B cell (primary cell): ENCODE measurements at regions of chr9 and their contacts with region 1.

Region 1: GRCh38 chr9:136410500-136411287 is at the starts of genes ENTR1 and PMPCA:
- DNase-seq: peak; percentile 95
- ATAC-seq: peak; percentile 88
- H3K4me3 ChIP-seq: peak within 1 kb of the TSS; percentile 46 to 96 (median 81)
- H3K4me3 Mint-ChIP-seq: peak within 1 kb of the TSS; percentile 92
- H3K27ac ChIP-seq: peak within 1 kb of the TSS; percentile 80 to 91
- H3K27ac Mint-ChIP-seq: peak within 1 kb of the TSS; percentile 92
- H3K4me1 ChIP-seq: peaks cover 25 to 34% of the 10 kb centered on the region in 2 donors
- H3K4me1 Mint-ChIP-seq: peaks cover 37% of the 10 kb centered on the region
- H3K27me3 ChIP-seq: no peaks in the 10 kb centered on the region
- H3K27me3 Mint-ChIP-seq: no peaks in the 10 kb centered on the region
- CTCF ChIP-seq: no peak
- total RNA-seq, gene ENTR1: 86.3 and 94.7 TPM in 2 replicates
- total RNA-seq, gene PMPCA: 64.6 and 72.2 TPM in 2 replicates

Region 2: DNA sequence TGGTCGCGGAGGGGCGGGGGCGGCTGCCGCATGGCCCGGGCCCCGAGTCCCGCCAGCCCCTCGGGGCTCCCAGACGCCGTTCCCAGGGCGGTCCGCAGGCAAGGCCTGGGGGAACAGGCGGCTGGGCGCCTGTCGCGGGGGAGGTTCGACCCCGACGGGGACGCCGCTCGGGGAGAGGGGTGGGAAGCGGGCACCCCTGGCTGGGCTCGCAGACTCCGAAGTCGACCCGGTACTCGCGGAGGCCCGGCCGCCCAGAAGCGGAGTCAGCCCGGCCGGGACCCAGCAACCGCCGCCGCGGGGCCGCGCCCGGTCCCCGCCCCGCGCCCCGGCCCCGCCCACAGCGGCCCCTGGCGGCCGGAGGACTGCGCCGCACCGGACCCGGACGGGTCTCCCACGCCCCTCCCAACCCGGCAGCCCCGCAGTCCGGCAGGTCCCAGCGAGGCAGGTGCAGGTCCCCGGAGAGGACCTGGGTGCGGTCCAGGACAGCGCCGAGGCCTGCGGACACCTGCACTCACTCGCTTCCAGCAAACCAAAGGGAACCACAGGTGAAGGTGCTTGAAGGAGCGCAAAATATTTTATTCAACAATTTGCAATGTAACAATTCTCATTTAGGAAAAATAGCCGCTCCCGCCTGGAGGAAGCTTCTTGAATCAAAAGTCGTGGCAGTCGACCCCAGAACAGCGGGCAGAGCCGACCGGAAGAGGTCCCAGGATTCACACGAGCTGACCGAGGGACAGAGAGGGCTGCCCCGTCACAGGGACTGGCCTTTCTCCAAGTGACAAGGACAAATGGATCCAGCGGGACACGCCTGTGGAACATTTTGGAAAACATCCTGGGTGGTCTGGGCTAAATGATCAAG is 29.1 kb after region 1 on chr9 and contains the start of gene INPP5E:
- CTCF ChIA-PET with region 1: interaction called, 3 read pairs
- POLR2A ChIA-PET with region 1: interaction called, 4 read pairs
- intact Hi-C with region 1: loop called (anchors 2 kb)
- DNase-seq: peak; percentile 90
- ATAC-seq: peak; percentile 87
- H3K4me3 ChIP-seq: peak within 1 kb of the TSS; percentile 31 to 79 (median 70)
- H3K4me3 Mint-ChIP-seq: peak within 1 kb of the TSS; percentile 84
- H3K27ac ChIP-seq: peak within 1 kb of the TSS in 1 of 2 donors; percentile 55
- H3K27ac Mint-ChIP-seq: peak within 1 kb of the TSS; percentile 77
- H3K4me1 ChIP-seq: peaks cover 21 to 28% of the 10 kb centered on the region in 2 donors
- H3K4me1 Mint-ChIP-seq: peaks cover 26% of the 10 kb centered on the region
- H3K27me3 ChIP-seq: no peaks in the 10 kb centered on the region
- H3K27me3 Mint-ChIP-seq: no peaks in the 10 kb centered on the region
- CTCF ChIP-seq: peak; percentile 81
- total RNA-seq, gene INPP5E: 33.1 and 35.3 TPM in 2 replicates